ENCODE measurements at regions of chr3 and their contacts with region 1.

Region 1: GRCh38 chr3:88113311-88114162 is 36.2 kb upstream of the C3orf38 start:
- DNase-seq: peak; percentile 71
- H3K4me3 Mint-ChIP-seq: no peak overlapping the region
- H3K27ac Mint-ChIP-seq: no peak overlapping the region
- H3K4me1 Mint-ChIP-seq: peaks cover 20% of the 10 kb centered on the region
- H3K27me3 Mint-ChIP-seq: no peaks in the 10 kb centered on the region

Region 2: GRCh38 chr3:87350364-87351199 is 763.0 kb before region 1 on chr3:
- CTCF ChIA-PET with region 1: no interaction called
- intact Hi-C with region 1: loop called (anchors 2 kb)
- DNase-seq: peak; percentile 22
- H3K4me3 Mint-ChIP-seq: no peak overlapping the region
- H3K27ac Mint-ChIP-seq: no peak overlapping the region
- H3K4me1 Mint-ChIP-seq: peaks cover 2% of the 10 kb centered on the region
- H3K27me3 Mint-ChIP-seq: peaks cover 3% of the 10 kb centered on the region

Region 3: GRCh38 chr3:87761341-87761740 is 352.2 kb before region 1 on chr3:
- CTCF ChIA-PET with region 1: no interaction called
- intact Hi-C with region 1: no loop called
- DNase-seq: no peak
- H3K4me3 Mint-ChIP-seq: no peak overlapping the region
- H3K27ac Mint-ChIP-seq: no peak overlapping the region
- H3K4me1 Mint-ChIP-seq: no peaks in the 10 kb centered on the region
- H3K27me3 Mint-ChIP-seq: peaks cover 5% of the 10 kb centered on the region

Region 4: GRCh38 chr3:87771341-87772192 is 342.0 kb before region 1 on chr3:
- CTCF ChIA-PET with region 1: interaction called, 8 read pairs
- intact Hi-C with region 1: loop called (anchors 1 kb)
- DNase-seq: peak; percentile 56
- H3K4me3 Mint-ChIP-seq: no peak overlapping the region
- H3K27ac Mint-ChIP-seq: no peak overlapping the region
- H3K4me1 Mint-ChIP-seq: no peaks in the 10 kb centered on the region
- H3K27me3 Mint-ChIP-seq: peaks cover 17% of the 10 kb centered on the region

Region 5: GRCh38 chr3:87900061-87900460 is 213.5 kb before region 1 on chr3:
- CTCF ChIA-PET with region 1: interaction called, 5 read pairs
- intact Hi-C with region 1: loop called (anchors 1 kb)
- DNase-seq: no peak
- H3K4me3 Mint-ChIP-seq: no peak overlapping the region
- H3K27ac Mint-ChIP-seq: no peak overlapping the region
- H3K4me1 Mint-ChIP-seq: no peaks in the 10 kb centered on the region
- H3K27me3 Mint-ChIP-seq: no peaks in the 10 kb centered on the region

Region 6: GRCh38 chr3:88009066-88009465 is 104.5 kb before region 1 on chr3:
- CTCF ChIA-PET with region 1: interaction called, 14 read pairs
- intact Hi-C with region 1: loop called (anchors 1 kb)
- DNase-seq: no peak
- H3K4me3 Mint-ChIP-seq: no peak overlapping the region
- H3K27ac Mint-ChIP-seq: no peak overlapping the region
- H3K4me1 Mint-ChIP-seq: no peaks in the 10 kb centered on the region
- H3K27me3 Mint-ChIP-seq: no peaks in the 10 kb centered on the region

Region 7: DNA sequence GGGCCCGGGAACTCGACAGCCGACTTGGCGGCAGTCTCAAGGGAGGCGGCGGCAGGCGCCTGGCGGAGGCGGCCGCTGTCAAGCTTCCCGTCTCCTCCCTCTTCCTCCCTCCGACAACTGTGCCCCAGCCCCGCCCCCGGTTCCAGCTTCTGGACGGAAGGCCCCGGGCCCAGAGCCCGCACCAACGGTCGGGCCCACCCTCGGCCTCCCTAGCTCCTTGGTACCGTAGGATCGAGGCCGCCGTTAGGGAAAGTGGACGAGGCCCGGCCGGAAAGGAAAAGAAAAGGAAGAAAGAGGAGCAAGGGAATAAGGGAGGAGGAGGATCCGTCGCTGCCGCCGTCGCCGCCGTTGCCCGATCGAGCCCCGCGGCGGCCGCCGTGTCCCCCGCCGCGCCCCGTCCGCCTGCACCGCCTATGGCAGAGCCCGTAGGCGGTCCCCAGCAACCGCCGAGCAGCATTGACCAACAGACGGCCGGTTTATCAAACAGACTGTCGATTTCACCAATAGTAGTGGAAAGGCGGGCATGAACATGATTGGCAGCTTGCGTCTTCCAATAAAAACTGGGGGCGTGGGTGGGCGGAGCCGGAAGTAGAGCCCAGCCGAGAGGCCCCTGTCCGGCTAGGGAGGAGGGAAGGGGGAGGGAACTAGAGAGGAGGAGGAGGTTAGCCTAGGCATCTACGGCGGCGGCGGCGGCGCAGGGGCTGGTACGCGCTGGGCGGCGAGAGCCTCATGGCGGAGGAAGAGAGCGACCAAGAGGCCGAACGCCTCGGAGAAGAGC is 54.8 kb before region 1 on chr3 and contains the starts of genes CGGBP1 and ZNF654:
- CTCF ChIA-PET with region 1: interaction called, 4 read pairs
- intact Hi-C with region 1: loop called (anchors 1 kb)
- DNase-seq: peak; percentile 99
- H3K4me3 Mint-ChIP-seq: peak within 1 kb of the TSS; percentile 90
- H3K27ac Mint-ChIP-seq: peak within 1 kb of the TSS; percentile 98
- H3K4me1 Mint-ChIP-seq: peaks cover 43% of the 10 kb centered on the region
- H3K27me3 Mint-ChIP-seq: no peaks in the 10 kb centered on the region
- total RNA-seq, gene CGGBP1: 91.9 to 94.0 TPM
- total RNA-seq, gene ZNF654: 17.8 to 18.8 TPM

Region 8: DNA sequence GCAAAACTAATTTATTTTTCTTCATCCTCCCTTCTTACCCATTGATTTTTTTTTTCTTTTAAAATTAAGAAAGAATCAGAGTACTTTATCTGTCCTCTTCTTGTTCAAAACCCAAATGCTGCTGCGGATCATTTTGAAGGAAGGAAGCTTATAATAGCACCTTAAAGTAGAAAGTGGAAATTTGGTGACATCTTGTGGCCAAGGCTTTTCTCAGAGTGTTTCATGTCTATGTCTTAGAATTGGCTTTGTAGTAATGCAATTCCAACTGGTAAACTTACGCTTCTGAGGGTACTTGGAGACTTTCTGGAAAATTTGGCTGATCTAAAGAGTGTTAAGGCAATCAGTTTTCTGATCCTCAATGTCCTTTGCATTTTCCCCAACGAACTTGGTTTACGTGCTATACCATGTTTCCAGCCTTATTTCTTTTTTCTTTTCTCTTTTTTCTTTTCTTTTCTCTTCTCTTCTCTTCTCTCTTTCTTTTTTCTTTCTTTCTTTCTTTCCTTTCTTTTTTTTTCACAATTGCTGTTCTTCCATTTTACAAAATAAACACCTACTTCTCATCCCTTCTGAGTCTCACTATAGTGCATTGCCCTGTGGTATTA is 67.0 kb after region 1 on chr3:
- CTCF ChIA-PET with region 1: interaction called, 3 read pairs
- intact Hi-C with region 1: loop called (anchors 1 kb)
- DNase-seq: peak; percentile 62
- H3K4me3 Mint-ChIP-seq: no peak overlapping the region
- H3K27ac Mint-ChIP-seq: no peak overlapping the region
- H3K4me1 Mint-ChIP-seq: no peaks in the 10 kb centered on the region
- H3K27me3 Mint-ChIP-seq: no peaks in the 10 kb centered on the region